K562 (cell line): ENCODE measurements at regions of chr19 and their contacts with region 1.

Region 1: DNA sequence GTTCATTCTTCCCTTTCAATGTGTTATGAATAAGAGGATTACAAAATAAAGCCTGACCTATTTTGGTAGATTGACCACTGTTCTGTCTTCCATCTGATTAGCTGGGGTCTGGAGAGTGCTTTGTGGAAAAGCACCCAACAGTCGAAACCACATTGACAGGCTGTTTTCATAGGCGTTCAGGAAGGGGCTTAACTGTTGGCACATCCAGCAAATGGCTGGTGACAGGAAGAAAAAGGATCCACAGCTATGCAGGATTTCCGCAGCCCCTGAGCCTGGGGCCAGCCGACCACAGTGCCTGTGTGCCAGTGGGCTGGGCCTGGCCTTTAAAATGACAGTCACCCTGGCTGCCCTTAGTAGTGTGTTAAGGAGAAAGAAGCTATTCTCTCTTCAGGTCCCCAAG is 113.3 kb downstream of the SIPA1L3 start:
- DNase-seq: no peak
- ATAC-seq: no peak
- H3K4me3 ChIP-seq: no peak overlapping the region
- H3K27ac ChIP-seq: no peak overlapping the region
- H3K4me1 ChIP-seq: no peaks in the 10 kb centered on the region
- H3K27me3 ChIP-seq: peaks cover 0 to 6% of the 10 kb centered on the region in 2 experiments; a peak in 3 of 5 replicates
- CTCF ChIP-seq: no peak
- EP300 ChIP-seq: no peak
- POLR2A ChIP-seq: no peak
- RAD21 ChIP-seq: no peak

Region 2: DNA sequence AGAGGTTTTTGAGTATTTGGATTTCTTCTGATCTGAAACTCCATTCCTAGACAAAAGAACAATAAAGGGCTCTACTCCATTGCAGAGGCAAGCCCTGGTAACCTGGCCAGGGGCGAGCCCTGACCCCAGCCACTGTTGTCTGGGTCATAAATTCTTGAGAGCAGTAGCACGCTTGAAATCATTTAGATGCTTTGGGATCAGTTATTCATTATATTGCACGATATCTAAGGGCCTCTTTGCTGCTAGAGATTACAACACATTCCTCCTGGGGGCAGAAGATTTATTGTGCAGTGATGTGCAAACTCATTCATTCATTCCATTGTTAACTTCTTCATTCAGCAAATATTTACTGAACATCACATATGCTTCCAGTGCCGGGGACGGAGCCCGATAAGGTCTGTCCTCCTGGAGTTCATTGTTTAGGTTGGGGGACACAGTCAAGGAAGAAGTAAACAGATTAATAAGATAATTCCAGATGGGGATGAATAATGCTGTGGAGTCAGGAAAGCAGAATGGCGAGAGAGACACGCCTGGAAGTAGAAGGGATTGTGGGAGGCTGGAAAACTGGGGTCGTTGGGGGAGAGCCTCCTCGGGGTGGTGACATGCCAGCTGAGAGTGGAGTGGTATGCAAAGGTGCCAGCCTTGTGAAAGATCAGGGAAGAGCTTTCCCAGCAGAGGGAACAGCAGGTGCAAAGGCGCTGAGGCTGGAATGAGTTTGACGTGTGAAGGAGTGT is 78.4 kb before region 1 on chr19:
- CTCF ChIA-PET with region 1: no interaction called
- POLR2A ChIA-PET with region 1: no interaction called
- in situ Hi-C with region 1: no loop called
- intact Hi-C with region 1: no loop called
- DNase-seq: no peak
- ATAC-seq: no peak
- H3K4me3 ChIP-seq: no peak overlapping the region
- H3K27ac ChIP-seq: no peak overlapping the region
- H3K4me1 ChIP-seq: peaks cover 8 to 10% of the 10 kb centered on the region in 2 experiments; a peak in 2 of 5 replicates
- H3K27me3 ChIP-seq: no peaks in the 10 kb centered on the region
- CTCF ChIP-seq: no peak
- EP300 ChIP-seq: no peak
- POLR2A ChIP-seq: no peak
- RAD21 ChIP-seq: no peak

Region 3: GRCh38 chr19:38004521-38005223 is 15.6 kb before region 1 on chr19:
- CTCF ChIA-PET with region 1: no interaction called
- POLR2A ChIA-PET with region 1: interaction called, 10 read pairs
- in situ Hi-C with region 1: no loop called
- intact Hi-C with region 1: no loop called
- DNase-seq: peak; percentile 70 to 80 (median 77)
- ATAC-seq: peak; percentile 97
- H3K4me3 ChIP-seq: no peak overlapping the region
- H3K27ac ChIP-seq: no peak overlapping the region
- H3K4me1 ChIP-seq: peaks cover 0 to 10% of the 10 kb centered on the region in 2 experiments; a peak in 2 of 5 replicates
- H3K27me3 ChIP-seq: peaks cover 0 to 4% of the 10 kb centered on the region in 2 experiments; a peak in 1 of 5 replicates
- CTCF ChIP-seq: no peak
- EP300 ChIP-seq: no peak
- POLR2A ChIP-seq: no peak
- RAD21 ChIP-seq: no peak